Right ventricle myocardium superior (tissue), 1 donor: ENCODE measurements at regions of chr2 and their contacts with region 1.

Region 1: GRCh38 chr2:113756355-113757137 is at the start of gene SLC35F5:
- DNase-seq: peak; percentile 97
- ATAC-seq: peak; percentile 99
- total RNA-seq, gene SLC35F5: 51.3 TPM

Region 2: GRCh38 chr2:113876503-113877387 is 120.2 kb after region 1 on chr2:
- intact Hi-C with region 1: no loop called
- DNase-seq: peak; percentile 50
- ATAC-seq: peak; percentile 47

Region 3: DNA sequence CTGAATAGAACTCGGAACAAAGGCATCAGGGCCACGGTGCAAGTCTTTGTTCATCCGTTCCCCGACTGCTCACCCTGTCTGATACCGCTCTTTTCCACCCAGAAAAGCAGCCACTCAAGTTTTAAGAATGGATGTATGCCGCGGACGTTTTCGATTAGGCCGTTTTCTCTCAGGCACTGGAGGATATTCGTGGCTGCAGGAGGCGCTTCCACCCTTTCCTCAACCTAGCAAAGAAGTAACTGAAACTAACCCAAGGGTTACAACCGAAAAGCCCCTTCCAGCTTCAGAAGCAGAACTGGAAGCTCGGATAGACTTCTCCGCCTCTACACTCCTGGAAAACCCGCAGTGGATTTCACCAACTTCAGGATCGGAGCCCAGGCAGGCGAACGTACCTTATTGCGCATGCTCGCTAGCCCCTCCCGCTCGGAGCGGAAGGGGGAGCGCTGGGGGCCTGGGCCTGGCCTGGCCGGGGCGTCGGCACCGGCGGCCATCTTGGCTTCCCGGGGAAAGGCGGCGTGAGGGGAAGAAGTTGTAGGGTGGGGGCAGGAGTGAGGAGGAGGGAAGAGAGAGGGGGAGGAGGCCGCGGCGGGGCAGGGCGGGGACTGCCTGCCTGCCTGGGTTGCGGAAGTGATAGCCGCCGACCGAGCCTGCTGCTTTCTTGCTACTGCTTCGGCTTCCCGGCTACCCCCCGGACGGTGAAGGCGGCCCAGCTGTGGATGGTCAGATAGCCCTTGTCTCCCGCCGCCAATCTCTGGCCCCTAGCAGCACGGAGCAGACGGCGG is 133.1 kb after region 1 on chr2 and contains the start of gene ACTR3:
- intact Hi-C with region 1: loop called (anchors 10 kb)
- DNase-seq: peak; percentile 98
- ATAC-seq: peak; percentile 97
- total RNA-seq, gene ACTR3: 106 TPM